OCI-LY7 (cell line): ENCODE measurements at regions of chr6 and their contacts with region 1.

Region 1: DNA sequence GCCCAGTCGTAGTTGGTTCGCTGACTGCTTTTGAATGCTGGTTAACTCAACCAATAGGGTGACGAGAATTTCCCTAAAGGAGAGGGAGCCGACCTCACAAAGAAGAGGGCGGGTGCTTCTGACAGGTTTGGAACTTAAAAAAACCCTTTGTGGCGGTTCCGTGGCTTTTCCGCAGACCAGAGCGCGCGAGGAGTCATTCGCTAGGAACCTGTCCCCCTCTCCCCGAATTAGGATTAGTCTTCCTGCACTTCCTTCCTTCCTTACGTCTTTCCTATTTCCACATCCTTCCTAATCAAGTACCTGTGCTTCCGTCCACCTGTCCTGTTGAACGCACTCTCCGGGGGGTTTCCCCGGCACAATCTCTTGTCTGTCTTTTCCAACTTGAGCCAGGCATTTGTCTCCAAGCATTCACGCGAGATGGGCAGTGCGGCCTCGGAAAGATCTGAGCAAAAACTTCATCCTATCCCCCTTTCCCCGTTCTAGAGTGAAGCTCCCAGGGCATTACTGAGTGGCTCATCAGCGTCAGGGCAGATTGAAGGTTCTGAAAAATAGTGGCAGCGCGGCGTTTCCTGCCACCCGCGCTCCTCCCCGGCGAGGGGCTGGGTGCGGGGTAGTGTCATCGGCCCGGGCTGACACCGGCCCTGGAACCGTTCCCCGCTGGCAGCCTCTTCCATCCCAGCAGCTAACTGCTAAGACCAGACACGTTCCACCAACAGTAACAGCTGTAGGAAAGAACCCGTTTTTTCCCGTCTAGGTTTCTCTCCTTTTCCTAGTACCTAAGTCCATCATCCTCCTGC is 1.5 kb upstream of the STXBP5 start:
- DNase-seq: peak; percentile 95
- H3K4me3 ChIP-seq: peak overlapping the region; percentile 100
- H3K27ac ChIP-seq: peak overlapping the region; percentile 80
- H3K4me1 ChIP-seq: peaks cover 21% of the 10 kb centered on the region
- CTCF ChIP-seq: no peak

Region 2: GRCh38 chr6:145963216-145964068 is 1239.3 kb before region 1 on chr6:
- CTCF ChIA-PET with region 1: no interaction called
- POLR2A ChIA-PET with region 1: no interaction called
- intact Hi-C with region 1: loop called (anchors 10 kb)
- DNase-seq: peak; percentile 65
- H3K4me3 ChIP-seq: peak overlapping the region; percentile 84
- H3K27ac ChIP-seq: peak overlapping the region; percentile 40
- H3K4me1 ChIP-seq: peaks cover 41% of the 10 kb centered on the region
- CTCF ChIP-seq: no peak

Region 3: DNA sequence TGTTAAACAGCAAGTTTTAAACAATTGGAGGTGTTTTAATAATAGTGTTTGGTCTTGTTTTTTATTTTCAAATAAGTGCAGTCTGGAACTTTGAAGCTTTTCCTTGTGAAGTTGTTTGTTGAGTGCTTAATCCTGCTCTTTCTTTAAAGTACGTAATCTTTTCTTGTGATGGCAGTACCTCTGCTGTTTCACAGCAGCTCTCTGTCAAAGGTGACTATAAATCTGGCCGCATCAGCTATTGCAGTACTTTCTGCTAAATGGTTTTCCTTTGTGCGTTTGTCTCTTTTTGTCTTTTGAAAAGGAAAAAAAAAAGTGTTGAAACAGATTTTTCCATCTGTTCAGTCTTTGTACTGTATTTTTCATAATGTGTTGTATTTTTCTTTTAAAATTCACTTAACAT is 14.2 kb after region 1 on chr6:
- CTCF ChIA-PET with region 1: no interaction called
- POLR2A ChIA-PET with region 1: interaction called, 10 read pairs
- intact Hi-C with region 1: no loop called
- DNase-seq: no peak
- H3K4me3 ChIP-seq: no peak overlapping the region
- H3K27ac ChIP-seq: no peak overlapping the region
- H3K4me1 ChIP-seq: no peaks in the 10 kb centered on the region
- CTCF ChIP-seq: no peak

Region 4: DNA sequence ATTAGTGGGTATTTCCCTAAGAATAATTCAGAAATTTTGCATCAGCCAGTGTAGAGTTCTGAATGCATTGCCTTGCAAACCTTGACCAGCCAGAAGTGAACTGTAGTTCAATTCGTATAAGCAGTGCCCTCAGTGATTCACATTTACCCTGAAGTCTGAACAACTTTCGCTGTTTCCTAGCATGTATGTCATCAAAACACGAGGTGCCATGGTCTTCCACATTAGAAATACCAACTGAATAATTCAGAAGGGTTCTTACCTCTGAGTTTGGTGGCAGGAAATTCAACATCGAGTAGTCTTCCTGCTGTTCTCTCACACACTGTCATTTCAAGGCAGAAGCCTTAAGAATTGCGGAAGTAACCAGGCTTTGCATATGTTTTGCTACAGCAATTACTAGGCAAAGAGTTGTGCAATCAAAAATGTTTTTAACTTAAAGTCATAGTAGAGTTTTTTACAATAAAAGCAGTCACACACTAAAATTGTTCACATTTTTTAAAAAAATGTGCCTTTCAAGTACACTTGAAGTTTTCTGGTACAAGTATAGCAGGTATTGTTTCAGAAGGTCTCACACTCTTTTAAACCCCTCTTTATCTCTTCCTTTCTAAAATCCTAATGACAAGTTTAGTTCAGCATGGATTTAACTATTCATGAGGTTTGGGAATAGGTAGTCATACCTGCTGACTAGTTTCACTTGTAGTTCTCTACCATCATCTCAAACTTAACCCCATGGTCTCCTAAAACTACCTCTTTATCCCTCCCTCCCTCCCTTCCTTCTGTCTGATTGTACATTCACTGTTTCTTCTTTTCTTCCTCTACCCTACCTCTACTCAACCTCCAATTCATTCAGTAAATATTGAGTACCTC is 119.8 kb after region 1 on chr6:
- CTCF ChIA-PET with region 1: no interaction called
- POLR2A ChIA-PET with region 1: no interaction called
- intact Hi-C with region 1: no loop called
- DNase-seq: no peak
- H3K4me3 ChIP-seq: no peak overlapping the region
- H3K27ac ChIP-seq: no peak overlapping the region
- H3K4me1 ChIP-seq: no peaks in the 10 kb centered on the region
- CTCF ChIP-seq: no peak

Region 5: DNA sequence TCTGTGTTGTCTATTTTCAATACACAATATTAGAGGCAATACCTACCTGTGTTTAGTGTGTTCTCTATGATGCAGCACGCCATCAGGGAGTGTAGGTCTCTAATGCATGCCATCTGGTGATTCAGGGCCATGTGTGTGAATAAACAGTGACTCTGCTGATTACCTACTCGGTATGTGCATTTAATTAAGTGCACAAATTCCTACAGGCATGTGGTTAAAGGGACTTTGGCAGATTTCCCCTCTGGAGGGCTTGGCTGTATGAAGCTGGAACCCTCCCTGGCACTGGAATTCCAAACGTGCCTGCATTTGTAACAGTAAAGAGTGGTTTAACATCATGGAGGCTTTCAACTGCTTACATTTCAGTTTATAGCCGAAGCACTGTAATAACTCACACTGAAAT is 738.4 kb after region 1 on chr6:
- CTCF ChIA-PET with region 1: no interaction called
- POLR2A ChIA-PET with region 1: no interaction called
- intact Hi-C with region 1: no loop called
- DNase-seq: no peak
- H3K4me3 ChIP-seq: no peak overlapping the region
- H3K27ac ChIP-seq: no peak overlapping the region
- H3K4me1 ChIP-seq: no peaks in the 10 kb centered on the region
- CTCF ChIP-seq: no peak

Region 6: DNA sequence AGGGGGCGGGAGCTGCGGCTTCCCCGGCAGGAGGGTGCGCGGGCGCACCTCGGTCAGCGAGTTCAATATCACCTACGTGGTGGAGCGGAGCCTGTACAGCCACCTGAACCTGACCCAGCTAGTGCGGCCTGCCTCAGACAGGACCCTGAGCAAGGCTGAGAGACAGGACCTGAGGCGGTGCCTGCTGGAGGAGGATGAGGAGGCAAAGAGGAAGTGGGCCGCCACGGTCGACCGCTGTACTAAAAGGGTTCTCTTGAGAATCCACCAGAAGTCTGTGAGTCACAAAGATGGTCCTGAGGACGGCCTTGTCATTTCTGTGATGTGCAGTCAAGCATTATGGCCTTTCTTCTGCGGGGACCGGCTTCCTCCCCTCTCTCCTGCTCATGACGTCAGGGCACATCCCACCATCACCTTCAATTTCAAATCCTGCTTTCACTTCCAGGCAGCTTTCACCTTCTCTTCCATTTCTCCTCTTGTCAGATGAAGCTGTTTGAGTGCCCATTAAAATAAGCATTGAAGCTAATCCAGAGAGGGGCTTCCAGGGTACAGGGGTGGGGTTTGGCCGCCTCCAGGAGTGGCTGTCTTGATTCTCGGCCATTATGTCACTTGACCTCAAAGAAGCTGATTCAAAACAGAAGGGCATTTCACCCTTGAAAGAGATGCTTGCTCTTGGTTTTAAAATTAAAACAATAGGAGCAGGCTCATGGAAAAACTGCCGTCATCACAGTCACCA is 1317.6 kb after region 1 on chr6:
- CTCF ChIA-PET with region 1: no interaction called
- POLR2A ChIA-PET with region 1: no interaction called
- intact Hi-C with region 1: loop called (anchors 5 kb)
- DNase-seq: peak; percentile 85
- H3K4me3 ChIP-seq: peak overlapping the region; percentile 53
- H3K27ac ChIP-seq: peak overlapping the region; percentile 35
- H3K4me1 ChIP-seq: peaks cover 30% of the 10 kb centered on the region
- CTCF ChIP-seq: no peak